ENCODE measurements at regions of chr22 and their contacts with region 1.

Region 1: GRCh38 chr22:20904008-20904979 is 12.9 kb upstream of the CRKL start:
- DNase-seq: peak; percentile 86
- H3K4me3 ChIP-seq: no peak overlapping the region
- CTCF ChIP-seq: no peak

Region 2: DNA sequence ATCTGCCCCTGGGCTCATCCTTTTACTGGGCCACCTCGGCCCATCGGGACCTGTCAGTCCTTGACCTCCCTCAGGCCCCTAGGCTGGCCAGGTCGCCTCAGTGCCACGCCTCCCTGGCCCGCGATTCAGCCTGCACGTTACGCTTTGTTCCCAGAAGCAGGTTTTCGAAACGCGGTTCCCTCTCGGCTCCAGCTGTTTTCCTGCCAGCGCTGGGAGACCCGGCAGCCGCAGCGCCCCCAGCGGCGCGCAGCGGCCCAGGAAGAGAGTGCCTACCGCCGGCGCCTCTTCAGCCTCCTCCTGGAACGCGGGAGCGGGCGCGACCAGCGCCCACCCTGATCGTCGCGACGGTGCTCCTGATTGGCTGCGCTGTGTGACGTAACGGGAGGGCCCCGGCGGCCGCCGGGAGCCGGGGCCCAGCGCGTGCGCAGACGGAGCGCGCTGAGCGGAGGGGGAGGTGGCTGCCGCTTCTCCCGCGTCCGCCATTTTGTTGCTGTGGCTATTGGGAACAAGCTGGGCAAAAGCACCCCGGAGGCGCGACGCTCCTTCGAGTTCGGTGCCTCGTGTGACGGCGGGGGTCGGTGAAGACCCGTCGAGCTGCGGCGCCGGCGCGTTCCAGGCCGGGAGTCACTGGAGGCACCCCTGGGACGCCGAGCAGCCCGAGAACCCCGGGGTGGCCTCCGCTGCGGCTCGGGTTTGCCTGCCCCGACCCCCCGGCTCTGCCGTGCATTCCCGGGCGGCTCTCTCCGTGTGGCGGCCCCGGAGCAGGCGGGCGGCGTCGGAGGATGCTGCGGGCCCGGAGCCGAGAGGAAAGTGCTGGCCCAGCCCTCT is 12.9 kb after region 1 on chr22 and contains the start of gene CRKL:
- CTCF ChIA-PET with region 1: interaction called, 30 read pairs
- POLR2A ChIA-PET with region 1: interaction called, 3 read pairs
- DNase-seq: peak; percentile 60
- H3K4me3 ChIP-seq: peak within 1 kb of the TSS; percentile 95
- CTCF ChIP-seq: peak; percentile 99